Caco-2 (cell line): ENCODE measurements at regions of chr6 and their contacts with region 1.

Region 1: DNA sequence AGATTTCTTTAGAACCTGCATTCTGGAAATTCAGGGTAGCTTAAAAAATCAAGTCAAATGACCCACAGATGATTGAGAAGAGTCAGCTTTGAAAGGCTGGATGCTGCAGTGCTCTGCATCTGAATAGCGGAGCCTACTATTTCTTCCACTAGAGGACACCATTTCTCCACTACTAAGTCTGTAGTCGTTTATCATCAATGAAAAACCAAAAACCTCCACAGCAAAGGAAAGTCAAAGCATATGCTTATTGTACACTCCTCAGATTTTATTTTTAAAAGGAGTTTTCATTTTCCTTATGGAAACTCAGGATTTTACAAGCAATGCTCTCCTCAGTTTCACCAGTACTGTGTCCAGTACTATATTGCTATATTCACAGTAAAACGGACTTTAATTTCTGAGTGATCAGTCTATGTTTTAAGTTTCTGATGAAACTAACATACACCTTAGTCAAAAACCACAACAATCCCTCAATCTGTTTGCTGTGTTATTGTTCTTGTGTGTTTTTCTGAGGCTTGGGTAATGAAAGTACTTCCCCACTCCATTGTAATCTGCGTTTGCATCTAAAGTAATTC is 50.5 kb upstream of the ENPP5 start:
- DNase-seq: peak in 1 of 2 experiments; percentile 25
- H3K4me3 ChIP-seq: no peak overlapping the region
- H3K4me3 Mint-ChIP-seq: no peak overlapping the region
- H3K27ac Mint-ChIP-seq: no peak overlapping the region
- H3K4me1 ChIP-seq: no peaks in the 10 kb centered on the region
- H3K4me1 Mint-ChIP-seq: no peaks in the 10 kb centered on the region
- H3K27me3 ChIP-seq: no peaks in the 10 kb centered on the region
- H3K27me3 Mint-ChIP-seq: peaks cover 10% of the 10 kb centered on the region
- CTCF ChIP-seq: peak; percentile 61 to 82

Region 2: GRCh38 chr6:46078294-46078693 is 143.0 kb before region 1 on chr6:
- CTCF ChIA-PET with region 1: no interaction called
- POLR2A ChIA-PET with region 1: no interaction called
- intact Hi-C with region 1: no loop called
- DNase-seq: no peak
- H3K4me3 ChIP-seq: no peak overlapping the region
- H3K4me3 Mint-ChIP-seq: no peak overlapping the region
- H3K27ac Mint-ChIP-seq: no peak overlapping the region
- H3K4me1 ChIP-seq: no peaks in the 10 kb centered on the region; the same call in 1 of the 2 replicates
- H3K4me1 Mint-ChIP-seq: no peaks in the 10 kb centered on the region
- H3K27me3 ChIP-seq: no peaks in the 10 kb centered on the region
- H3K27me3 Mint-ChIP-seq: peaks cover 8% of the 10 kb centered on the region
- CTCF ChIP-seq: no peak

Region 3: DNA sequence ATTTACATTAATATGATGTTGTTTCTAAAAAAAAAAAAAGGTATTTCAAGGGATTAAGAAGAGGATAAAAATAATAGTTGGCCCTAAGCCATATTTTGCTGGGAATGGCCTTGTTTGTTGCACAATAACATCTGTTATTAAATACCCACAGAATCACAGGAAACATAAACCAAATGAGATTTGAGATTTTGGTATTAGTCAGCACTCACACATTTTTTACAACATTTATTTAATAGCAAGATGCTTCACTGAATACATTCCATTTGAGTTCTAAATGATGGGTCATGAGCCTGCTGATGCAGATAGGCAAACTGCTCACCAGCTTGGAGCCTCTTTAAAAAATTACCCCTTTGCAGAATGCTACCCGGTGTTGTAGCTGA is 42.4 kb after region 1 on chr6:
- CTCF ChIA-PET with region 1: no interaction called
- POLR2A ChIA-PET with region 1: no interaction called
- intact Hi-C with region 1: no loop called
- DNase-seq: no peak
- H3K4me3 ChIP-seq: no peak overlapping the region
- H3K4me3 Mint-ChIP-seq: no peak overlapping the region
- H3K27ac Mint-ChIP-seq: no peak overlapping the region
- H3K4me1 ChIP-seq: no peaks in the 10 kb centered on the region
- H3K4me1 Mint-ChIP-seq: no peaks in the 10 kb centered on the region
- H3K27me3 ChIP-seq: no peaks in the 10 kb centered on the region; the same call in 1 of the 2 replicates
- H3K27me3 Mint-ChIP-seq: peaks cover 10% of the 10 kb centered on the region
- CTCF ChIP-seq: no peak

Region 4: GRCh38 chr6:46410334-46410953 is 189.1 kb after region 1 on chr6:
- CTCF ChIA-PET with region 1: interaction called, 3 read pairs
- POLR2A ChIA-PET with region 1: no interaction called
- intact Hi-C with region 1: loop called (anchors 1 kb)
- DNase-seq: peak in 1 of 2 experiments; percentile 8
- H3K4me3 ChIP-seq: no peak overlapping the region
- H3K4me3 Mint-ChIP-seq: no peak overlapping the region
- H3K27ac Mint-ChIP-seq: no peak overlapping the region
- H3K4me1 ChIP-seq: no peaks in the 10 kb centered on the region
- H3K4me1 Mint-ChIP-seq: peaks cover 4% of the 10 kb centered on the region
- H3K27me3 ChIP-seq: no peaks in the 10 kb centered on the region
- H3K27me3 Mint-ChIP-seq: peaks cover 3% of the 10 kb centered on the region
- CTCF ChIP-seq: peak; percentile 31 to 63

Region 5: GRCh38 chr6:46626228-46626909 is 405.1 kb after region 1 on chr6:
- CTCF ChIA-PET with region 1: no interaction called
- POLR2A ChIA-PET with region 1: no interaction called
- intact Hi-C with region 1: loop called (anchors 1 kb)
- DNase-seq: peak in 1 of 2 experiments; percentile 16
- H3K4me3 ChIP-seq: no peak overlapping the region
- H3K4me3 Mint-ChIP-seq: no peak overlapping the region
- H3K27ac Mint-ChIP-seq: no peak overlapping the region
- H3K4me1 ChIP-seq: no peaks in the 10 kb centered on the region
- H3K4me1 Mint-ChIP-seq: no peaks in the 10 kb centered on the region
- H3K27me3 ChIP-seq: no peaks in the 10 kb centered on the region
- H3K27me3 Mint-ChIP-seq: peaks cover 8% of the 10 kb centered on the region
- CTCF ChIP-seq: peak; percentile 35 to 64

Region 6: GRCh38 chr6:46652603-46653438 is 431.5 kb after region 1 on chr6 and contains the starts of genes CYP39A1 and SLC25A27:
- CTCF ChIA-PET with region 1: no interaction called
- POLR2A ChIA-PET with region 1: no interaction called
- intact Hi-C with region 1: no loop called
- DNase-seq: peak; percentile 87 to 90
- H3K4me3 ChIP-seq: peak within 1 kb of the TSS; percentile 78
- H3K4me3 Mint-ChIP-seq: peak within 1 kb of the TSS; percentile 88
- H3K27ac Mint-ChIP-seq: peak within 1 kb of the TSS; percentile 64
- H3K4me1 ChIP-seq: peaks cover 7% of the 10 kb centered on the region; the same call in 1 of the 2 replicates
- H3K4me1 Mint-ChIP-seq: peaks cover 5% of the 10 kb centered on the region
- H3K27me3 ChIP-seq: no peaks in the 10 kb centered on the region
- H3K27me3 Mint-ChIP-seq: peaks cover 17% of the 10 kb centered on the region
- CTCF ChIP-seq: no peak
- total RNA-seq, gene CYP39A1: not detected in 2 replicates
- total RNA-seq, gene SLC25A27: 0.64 TPM in 1 of 2 replicates, not detected in the other